GM12878 (cell line): ENCODE measurements at regions of chr7 and their contacts with region 1.

Region 1: GRCh38 chr7:137501562-137501961 is 158.0 kb upstream of the PTN start:
- DNase-seq: no peak
- ATAC-seq: no peak
- H3K4me3 ChIP-seq: no peak overlapping the region
- H3K27ac ChIP-seq: no peak overlapping the region
- H3K4me1 ChIP-seq: no peaks in the 10 kb centered on the region
- H3K27me3 ChIP-seq: no peaks in the 10 kb centered on the region
- CTCF ChIP-seq: no peak
- EP300 ChIP-seq: no peak
- POLR2A ChIP-seq: no peak
- RAD21 ChIP-seq: no peak

Region 2: DNA sequence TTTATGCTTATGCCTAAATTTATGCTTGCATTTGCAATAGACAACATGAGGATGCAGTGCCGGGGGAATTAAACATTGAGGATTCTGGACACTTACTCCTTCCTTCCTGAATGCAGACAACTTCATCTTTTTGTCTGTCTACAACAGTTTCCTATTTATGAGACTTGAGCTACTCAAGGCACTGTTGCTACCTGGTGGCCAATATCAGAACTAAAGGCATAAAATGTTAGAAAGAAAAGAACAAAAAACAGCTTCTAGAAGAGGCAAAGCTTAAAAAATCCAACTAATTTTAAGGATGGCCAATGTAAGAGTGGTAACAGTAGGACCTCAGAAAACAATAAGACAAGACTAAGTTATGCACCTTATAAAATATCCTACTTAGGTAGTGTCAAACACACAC is 13.5 kb before region 1 on chr7:
- CTCF ChIA-PET with region 1: interaction called, 6 read pairs
- POLR2A ChIA-PET with region 1: interaction called, 5 read pairs
- RAD21 ChIA-PET with region 1: no interaction called
- SMC1A ChIA-PET with region 1: interaction called, 13 read pairs
- in situ Hi-C with region 1: no loop called
- intact Hi-C with region 1: no loop called
- DNase-seq: no peak
- ATAC-seq: no peak
- H3K4me3 ChIP-seq: no peak overlapping the region
- H3K27ac ChIP-seq: no peak overlapping the region
- H3K4me1 ChIP-seq: no peaks in the 10 kb centered on the region
- H3K27me3 ChIP-seq: no peaks in the 10 kb centered on the region
- CTCF ChIP-seq: no peak
- EP300 ChIP-seq: no peak
- POLR2A ChIP-seq: no peak
- RAD21 ChIP-seq: peak; percentile 18; the same call in 1 of the 2 replicates

Region 3: DNA sequence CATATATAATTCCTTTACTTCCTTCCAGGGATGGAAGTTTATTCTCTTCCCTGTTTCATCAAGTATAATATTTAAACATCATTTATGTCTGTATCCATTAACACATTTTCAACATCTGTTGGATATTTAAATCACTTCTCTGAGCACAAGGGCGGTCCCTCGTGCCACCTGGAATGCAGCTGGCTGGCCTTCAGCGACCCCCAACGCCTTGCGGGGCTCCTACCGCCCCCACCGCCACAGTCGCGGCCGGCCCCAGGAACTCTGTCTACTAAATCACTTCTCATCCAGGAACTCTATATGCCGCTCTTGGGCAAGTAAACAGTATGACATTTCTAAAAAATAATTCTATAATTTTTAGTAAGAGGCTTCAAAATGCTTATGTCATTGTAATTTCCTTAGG is 63.1 kb after region 1 on chr7:
- CTCF ChIA-PET with region 1: no interaction called
- POLR2A ChIA-PET with region 1: no interaction called
- RAD21 ChIA-PET with region 1: no interaction called
- SMC1A ChIA-PET with region 1: no interaction called
- in situ Hi-C with region 1: no loop called
- intact Hi-C with region 1: no loop called
- DNase-seq: no peak
- ATAC-seq: no peak
- H3K4me3 ChIP-seq: no peak overlapping the region
- H3K27ac ChIP-seq: no peak overlapping the region
- H3K4me1 ChIP-seq: no peaks in the 10 kb centered on the region
- H3K27me3 ChIP-seq: no peaks in the 10 kb centered on the region
- CTCF ChIP-seq: no peak
- EP300 ChIP-seq: no peak
- POLR2A ChIP-seq: no peak
- RAD21 ChIP-seq: no peak